CD4-positive, alpha-beta memory T cell (primary cell): ENCODE measurements at regions of chr10 and their contacts with region 1.

Region 1: GRCh38 chr10:100878291-100878910 is 34.4 kb upstream of the SLF2 start:
- DNase-seq: peak in 3 of 5 donors; percentile 13 to 17 (median 14)
- H3K4me3 ChIP-seq: no peak overlapping the region
- H3K4me3 Mint-ChIP-seq: no peak overlapping the region
- H3K27ac ChIP-seq: no peak overlapping the region
- H3K27ac Mint-ChIP-seq: no peak overlapping the region
- H3K4me1 ChIP-seq: no peaks in the 10 kb centered on the region
- H3K4me1 Mint-ChIP-seq: no peaks in the 10 kb centered on the region
- H3K27me3 ChIP-seq: no peaks in the 10 kb centered on the region
- H3K27me3 Mint-ChIP-seq: peaks cover 11 to 23% of the 10 kb centered on the region in 2 donors

Region 2: GRCh38 chr10:100670828-100671479 is 207.4 kb before region 1 on chr10:
- CTCF ChIA-PET with region 1: no interaction called
- POLR2A ChIA-PET with region 1: no interaction called
- intact Hi-C with region 1: loop called (anchors 2 kb)
- DNase-seq: peak in 4 of 5 donors; percentile 45 to 57 (median 50)
- H3K4me3 ChIP-seq: no peak overlapping the region
- H3K4me3 Mint-ChIP-seq: peak overlapping the region in 6 of 8 donors; percentile 34 to 78 (median 56)
- H3K27ac ChIP-seq: no peak overlapping the region
- H3K27ac Mint-ChIP-seq: no peak overlapping the region
- H3K4me1 ChIP-seq: peaks cover 5% of the 10 kb centered on the region
- H3K4me1 Mint-ChIP-seq: peaks cover 1 to 9% (median 6%) of the 10 kb centered on the region in 4 donors
- H3K27me3 ChIP-seq: peaks cover 33% of the 10 kb centered on the region
- H3K27me3 Mint-ChIP-seq: peaks cover 50 to 54% of the 10 kb centered on the region in 2 donors

Region 3: DNA sequence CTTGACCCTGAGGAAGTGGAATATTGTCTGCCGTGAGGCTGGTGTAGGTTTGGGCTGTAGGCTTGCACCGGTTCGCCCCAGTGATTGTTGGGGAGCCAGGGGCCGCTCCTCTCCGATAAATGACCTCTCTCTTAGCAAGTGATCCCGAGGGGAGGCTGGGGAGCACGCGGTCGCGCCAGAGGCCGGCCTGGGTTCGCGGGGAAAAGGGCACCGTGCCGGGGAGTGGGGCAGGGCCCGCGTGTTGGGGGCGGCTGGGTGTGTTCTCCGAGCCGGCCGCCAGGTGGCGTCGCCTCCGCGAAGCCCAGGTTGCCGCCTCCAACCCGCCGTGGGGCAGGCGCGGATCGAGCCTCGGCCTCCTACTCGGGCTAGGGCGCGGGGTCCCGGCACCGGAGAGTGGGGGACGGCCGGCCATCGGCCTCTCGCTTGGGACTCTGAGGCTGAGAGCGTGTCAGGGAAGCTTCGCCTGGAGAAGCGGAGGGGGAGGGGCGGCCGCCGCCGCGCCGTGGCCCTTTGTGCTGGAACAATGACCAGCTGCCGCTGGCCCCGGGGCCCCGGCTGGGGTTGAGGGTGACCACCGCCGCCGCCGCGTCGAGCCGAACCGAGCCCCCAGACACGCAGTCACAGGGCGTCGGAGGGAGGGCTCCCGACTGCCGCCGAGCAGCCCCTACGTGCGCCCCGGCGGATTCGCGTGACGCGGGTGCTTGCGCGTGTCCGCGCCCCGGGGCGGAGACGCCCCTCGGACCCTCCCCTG is 120.8 kb after region 1 on chr10:
- CTCF ChIA-PET with region 1: no interaction called
- POLR2A ChIA-PET with region 1: no interaction called
- intact Hi-C with region 1: no loop called
- DNase-seq: peak; percentile 73 to 86 (median 79)
- H3K4me3 ChIP-seq: peak overlapping the region; percentile 64 to 73
- H3K4me3 Mint-ChIP-seq: peak overlapping the region; percentile 84 to 98 (median 91)
- H3K27ac ChIP-seq: peak overlapping the region; percentile 83
- H3K27ac Mint-ChIP-seq: peak overlapping the region; percentile 82 to 96 (median 94)
- H3K4me1 ChIP-seq: peaks cover 24% of the 10 kb centered on the region
- H3K4me1 Mint-ChIP-seq: peaks cover 15 to 34% (median 24%) of the 10 kb centered on the region in 4 donors
- H3K27me3 ChIP-seq: no peaks in the 10 kb centered on the region
- H3K27me3 Mint-ChIP-seq: no peaks in the 10 kb centered on the region